T-cell (primary cell): ENCODE measurements at regions of chr11 and their contacts with region 1.

Region 1: DNA sequence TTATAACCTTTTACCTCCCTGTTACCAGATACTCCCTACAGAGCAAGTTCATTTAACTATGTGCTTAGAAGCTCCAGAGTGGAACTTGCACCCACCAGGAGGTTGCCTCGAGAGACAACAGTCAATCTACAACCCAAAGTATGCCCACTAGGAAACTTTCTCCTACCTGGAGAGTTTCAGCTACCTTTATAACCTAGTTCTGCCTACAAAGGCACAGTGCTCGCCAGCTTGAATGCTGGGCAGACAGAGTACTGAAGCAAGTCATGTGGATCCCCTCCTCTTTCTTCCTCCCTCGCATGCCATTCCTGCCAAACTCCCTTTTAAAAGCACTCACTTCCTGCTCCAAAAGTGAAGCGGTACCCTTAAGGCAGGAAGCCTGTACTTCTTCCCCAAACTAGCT is 258.9 kb downstream of the SWAP70 start:
- DNase-seq: no peak
- ATAC-seq: no peak
- H3K4me3 ChIP-seq: no peak overlapping the region
- H3K4me3 Mint-ChIP-seq: no peak overlapping the region
- H3K27ac ChIP-seq: no peak overlapping the region
- H3K27ac Mint-ChIP-seq: no peak overlapping the region
- H3K4me1 ChIP-seq: no peaks in the 10 kb centered on the region
- H3K4me1 Mint-ChIP-seq: no peaks in the 10 kb centered on the region
- H3K27me3 ChIP-seq: no peaks in the 10 kb centered on the region
- H3K27me3 Mint-ChIP-seq: no peaks in the 10 kb centered on the region

Region 2: DNA sequence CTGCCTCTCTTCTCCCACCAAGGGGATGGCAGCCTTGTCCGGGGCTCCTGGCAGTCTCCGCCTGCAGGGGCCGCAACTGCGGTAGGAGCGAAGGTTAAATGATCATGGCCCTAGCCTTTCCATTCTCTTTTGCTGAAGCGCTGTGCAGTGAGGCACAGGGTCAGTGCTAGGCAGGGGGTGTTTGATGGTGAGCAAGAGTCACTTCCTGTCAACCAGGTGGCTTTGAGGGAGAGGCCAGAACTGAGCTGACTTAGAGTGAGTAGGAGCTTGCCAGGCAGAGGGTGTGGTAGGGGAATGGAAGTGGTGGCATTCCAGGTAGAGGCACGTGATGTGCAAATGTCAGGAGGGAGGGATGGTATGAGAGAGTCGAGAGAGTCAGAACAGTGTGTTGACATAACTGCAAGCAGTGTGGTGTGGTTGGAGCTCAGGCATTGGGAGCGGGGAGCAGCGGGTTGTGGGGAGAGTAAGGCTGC is 565.3 kb after region 1 on chr11:
- CTCF ChIA-PET with region 1: no interaction called
- POLR2A ChIA-PET with region 1: no interaction called
- DNase-seq: peak in 1 of 35 experiments; percentile 7
- ATAC-seq: no peak
- H3K4me3 ChIP-seq: no peak overlapping the region
- H3K4me3 Mint-ChIP-seq: no peak overlapping the region
- H3K27ac ChIP-seq: no peak overlapping the region
- H3K27ac Mint-ChIP-seq: peak overlapping the region; percentile 18 to 47
- H3K4me1 ChIP-seq: peaks cover 0 to 8% of the 10 kb centered on the region in 2 experiments
- H3K4me1 Mint-ChIP-seq: peaks cover 10 to 16% (median 11%) of the 10 kb centered on the region in 3 donors
- H3K27me3 ChIP-seq: no peaks in the 10 kb centered on the region
- H3K27me3 Mint-ChIP-seq: no peaks in the 10 kb centered on the region

Region 3: GRCh38 chr11:11178671-11179638 is 1256.1 kb after region 1 on chr11:
- CTCF ChIA-PET with region 1: no interaction called
- POLR2A ChIA-PET with region 1: interaction called in 1 of 2 experiments, 10 read pairs
- DNase-seq: no peak
- ATAC-seq: no peak
- H3K4me3 ChIP-seq: no peak overlapping the region
- H3K4me3 Mint-ChIP-seq: no peak overlapping the region
- H3K27ac ChIP-seq: no peak overlapping the region
- H3K27ac Mint-ChIP-seq: no peak overlapping the region
- H3K4me1 ChIP-seq: no peaks in the 10 kb centered on the region
- H3K4me1 Mint-ChIP-seq: no peaks in the 10 kb centered on the region
- H3K27me3 ChIP-seq: peaks cover 0 to 15% of the 10 kb centered on the region in 2 experiments
- H3K27me3 Mint-ChIP-seq: peaks cover 6 to 9% of the 10 kb centered on the region in 2 donors